Esophagus muscularis mucosa (tissue), 4 donors: ENCODE measurements at regions of chr5 and their contacts with region 1.

Region 1: DNA sequence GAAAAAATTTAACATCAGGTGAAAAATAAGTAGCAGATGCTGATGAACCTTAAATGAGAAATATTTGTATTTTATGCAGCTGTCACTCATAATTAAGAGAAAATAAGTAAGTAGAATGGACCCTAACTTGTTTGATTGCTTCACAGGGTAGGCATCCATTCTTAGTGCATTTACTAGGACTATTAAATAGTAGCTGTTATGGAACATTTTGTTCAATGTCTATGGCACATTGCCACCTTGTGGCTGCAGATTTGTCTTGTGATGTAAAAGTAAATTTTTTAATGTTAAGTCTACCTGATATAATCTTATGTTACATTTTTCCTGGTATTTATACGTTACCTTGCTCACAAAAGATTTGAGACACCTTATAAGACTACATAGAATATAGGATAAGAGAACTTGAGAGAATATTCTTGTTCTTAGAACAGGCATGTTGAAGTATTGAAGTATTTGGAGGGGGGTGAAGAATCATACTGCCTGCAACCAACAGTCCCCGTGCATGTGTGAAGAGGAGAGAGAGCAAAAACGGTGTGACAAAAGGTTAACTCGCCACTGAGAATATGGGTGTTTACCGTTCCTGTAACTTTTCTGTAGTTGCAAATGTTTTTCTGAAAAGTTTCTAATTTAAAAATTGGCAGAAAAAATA is 161.1 kb downstream of the MAST4 start:
- DNase-seq: peak; percentile 7
- H3K4me3 ChIP-seq: no peak overlapping the region
- H3K27ac ChIP-seq: no peak overlapping the region
- H3K4me1 ChIP-seq: peaks cover 0 to 10% (median 0%) of the 10 kb centered on the region in 4 donors
- H3K27me3 ChIP-seq: no peaks in the 10 kb centered on the region
- CTCF ChIP-seq: peak; percentile 17 to 35 (median 32)
- EP300 ChIP-seq: no peak
- POLR2A ChIP-seq: no peak

Region 2: GRCh38 chr5:66306105-66306843 is 451.0 kb before region 1 on chr5:
- intact Hi-C with region 1: loop called (anchors 5 kb)
- DNase-seq: no peak
- H3K4me3 ChIP-seq: no peak overlapping the region
- H3K27ac ChIP-seq: no peak overlapping the region
- H3K4me1 ChIP-seq: peaks cover 10 to 15% (median 13%) of the 10 kb centered on the region in 4 donors
- H3K27me3 ChIP-seq: peaks cover 0 to 7% (median 0%) of the 10 kb centered on the region in 4 donors
- CTCF ChIP-seq: peak; percentile 63 to 80 (median 63)
- EP300 ChIP-seq: no peak
- POLR2A ChIP-seq: no peak

Region 3: DNA sequence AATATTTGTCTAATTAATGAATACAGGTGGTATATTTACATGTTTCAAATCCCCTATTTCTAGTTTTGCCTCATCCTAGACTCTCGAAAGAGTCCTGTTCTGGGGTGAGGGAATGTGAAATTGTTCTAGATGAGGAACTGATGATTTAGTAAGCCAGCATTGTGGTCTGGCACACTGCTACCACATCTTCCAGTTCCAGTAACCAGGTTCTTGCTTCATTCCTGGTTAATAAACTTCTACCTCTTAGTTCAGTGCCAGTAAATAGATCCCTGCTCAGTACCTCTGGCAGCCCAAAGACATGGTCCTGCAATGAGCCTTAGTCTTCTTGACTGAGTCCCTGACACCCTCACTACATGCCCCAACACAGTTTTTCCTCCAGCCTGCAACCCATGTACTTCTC is 405.5 kb before region 1 on chr5:
- intact Hi-C with region 1: no loop called
- DNase-seq: no peak
- H3K4me3 ChIP-seq: no peak overlapping the region
- H3K27ac ChIP-seq: no peak overlapping the region
- H3K4me1 ChIP-seq: no peaks in the 10 kb centered on the region
- H3K27me3 ChIP-seq: no peaks in the 10 kb centered on the region
- CTCF ChIP-seq: no peak
- EP300 ChIP-seq: no peak
- POLR2A ChIP-seq: no peak

Region 4: DNA sequence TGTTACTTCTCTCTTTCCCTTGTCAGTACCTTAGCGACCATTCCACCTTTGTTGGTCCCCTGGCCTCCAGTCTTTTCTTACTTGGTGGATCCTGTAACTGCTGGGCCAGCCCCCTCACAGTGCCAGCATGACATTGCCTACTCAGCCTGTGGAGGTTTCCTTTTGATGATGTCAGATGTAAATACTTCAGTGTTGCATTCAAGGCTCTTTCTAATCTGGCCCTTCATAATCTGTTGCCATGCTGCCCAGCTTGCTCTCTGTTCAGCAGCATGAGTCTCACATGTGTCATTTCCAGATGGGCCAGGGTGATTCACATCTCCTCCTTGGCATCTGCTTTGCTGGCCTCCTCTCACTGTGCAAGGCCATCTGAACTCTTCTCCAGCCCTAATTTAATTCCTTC is 104.0 kb before region 1 on chr5:
- intact Hi-C with region 1: no loop called
- DNase-seq: no peak
- H3K4me3 ChIP-seq: no peak overlapping the region
- H3K27ac ChIP-seq: no peak overlapping the region
- H3K4me1 ChIP-seq: peaks cover 0 to 11% (median 0%) of the 10 kb centered on the region in 4 donors
- H3K27me3 ChIP-seq: no peaks in the 10 kb centered on the region
- CTCF ChIP-seq: no peak
- EP300 ChIP-seq: no peak
- POLR2A ChIP-seq: no peak